Endothelial cell of umbilical vein (primary cell): ENCODE measurements at regions of chr6 and their contacts with region 1.

Region 1: GRCh38 chr6:136037876-136038460 is 186.5 kb downstream of the PDE7B start:
- DNase-seq: peak; percentile 70
- H3K4me3 ChIP-seq: peak overlapping the region; percentile 53 to 97 (median 56)
- H3K27ac ChIP-seq: peak overlapping the region; percentile 93
- H3K4me1 ChIP-seq: peaks cover 70% of the 10 kb centered on the region
- H3K27me3 ChIP-seq: no peaks in the 10 kb centered on the region
- CTCF ChIP-seq: peak; percentile 20 to 39
- POLR2A ChIP-seq: no peak

Region 2: GRCh38 chr6:135630789-135631376 is 407.1 kb before region 1 on chr6:
- CTCF ChIA-PET with region 1: no interaction called
- POLR2A ChIA-PET with region 1: no interaction called
- dilution Hi-C with region 1: no loop called
- intact Hi-C with region 1: loop called (anchors 2 kb)
- DNase-seq: peak; percentile 91
- H3K4me3 ChIP-seq: no peak overlapping the region
- H3K27ac ChIP-seq: peak overlapping the region; percentile 80
- H3K4me1 ChIP-seq: peaks cover 21% of the 10 kb centered on the region
- H3K27me3 ChIP-seq: no peaks in the 10 kb centered on the region
- CTCF ChIP-seq: no peak
- POLR2A ChIP-seq: no peak

Region 3: DNA sequence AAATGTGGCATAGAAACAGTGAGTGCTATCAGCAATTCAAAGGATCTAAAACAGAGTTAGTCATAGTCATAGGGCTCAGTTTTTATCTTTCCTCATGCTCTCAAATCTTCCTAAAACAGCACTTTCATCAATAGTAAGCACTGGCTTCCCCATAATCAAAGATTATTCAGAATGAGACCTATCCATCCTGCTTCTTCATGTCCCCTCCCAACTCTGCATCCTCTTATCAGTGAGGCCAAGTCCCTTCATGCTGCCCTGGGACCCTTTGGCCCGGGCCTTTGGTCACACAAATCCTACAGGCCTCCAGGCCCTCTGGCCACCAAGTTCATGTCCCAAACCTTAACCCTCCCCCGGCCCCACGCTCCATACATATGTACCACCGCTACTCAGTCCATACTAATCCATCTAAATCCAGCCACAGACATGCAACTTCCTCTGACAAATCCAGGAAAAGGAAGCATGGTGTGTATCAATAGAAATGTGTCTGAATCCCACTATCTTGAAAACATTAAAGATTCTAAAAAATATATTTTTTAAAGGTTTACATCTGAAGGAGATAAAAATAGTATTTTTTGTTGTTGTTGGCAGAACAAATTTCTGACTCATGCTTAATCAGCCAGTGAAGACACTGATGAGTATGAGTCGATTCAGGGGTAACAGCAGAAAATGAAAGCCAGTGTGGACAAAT is 43.0 kb before region 1 on chr6:
- CTCF ChIA-PET with region 1: no interaction called
- POLR2A ChIA-PET with region 1: no interaction called
- dilution Hi-C with region 1: no loop called
- intact Hi-C with region 1: loop called (anchors 1 kb)
- DNase-seq: peak; percentile 82
- H3K4me3 ChIP-seq: no peak overlapping the region
- H3K27ac ChIP-seq: peak overlapping the region; percentile 82
- H3K4me1 ChIP-seq: peaks cover 19% of the 10 kb centered on the region
- H3K27me3 ChIP-seq: no peaks in the 10 kb centered on the region
- CTCF ChIP-seq: no peak
- POLR2A ChIP-seq: no peak

Region 4: DNA sequence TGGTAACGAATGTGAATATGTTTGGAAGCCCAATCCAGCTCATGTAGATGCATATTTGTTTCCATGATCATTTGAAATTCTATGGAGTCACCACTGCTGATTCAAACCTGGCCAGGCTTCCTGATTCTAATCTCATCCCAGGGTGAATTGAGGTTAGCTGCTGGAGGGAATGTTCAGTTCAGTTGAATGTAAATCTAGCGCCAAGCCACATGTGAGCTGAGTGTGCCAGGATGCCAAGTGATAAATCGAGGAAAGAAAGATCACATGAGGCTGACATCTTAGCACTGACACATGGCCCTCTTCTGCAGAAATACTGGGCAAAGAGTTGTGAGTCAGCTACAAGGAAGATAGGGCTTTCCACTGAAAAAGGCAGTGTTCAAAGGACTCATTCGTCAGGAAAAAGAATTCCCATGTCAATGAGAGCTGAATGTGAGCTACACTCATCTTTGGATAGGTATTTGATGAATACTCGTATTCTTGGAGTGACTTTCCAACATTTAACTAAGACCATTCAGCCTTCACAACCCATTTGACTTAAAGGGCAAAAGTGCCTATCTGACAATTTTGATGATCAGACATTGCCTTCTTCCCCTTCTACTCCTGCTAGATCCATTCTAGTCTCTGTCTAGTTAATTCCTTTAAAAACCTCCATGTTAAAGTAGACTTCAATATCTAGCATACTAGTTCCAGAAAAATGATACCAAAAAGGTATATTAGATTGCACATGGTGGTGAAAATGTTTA is 40.0 kb after region 1 on chr6:
- CTCF ChIA-PET with region 1: interaction called, 15 read pairs
- POLR2A ChIA-PET with region 1: no interaction called
- dilution Hi-C with region 1: no loop called
- intact Hi-C with region 1: no loop called
- DNase-seq: peak; percentile 97
- H3K4me3 ChIP-seq: no peak overlapping the region
- H3K27ac ChIP-seq: peak overlapping the region; percentile 69
- H3K4me1 ChIP-seq: peaks cover 23% of the 10 kb centered on the region
- H3K27me3 ChIP-seq: no peaks in the 10 kb centered on the region
- CTCF ChIP-seq: no peak
- POLR2A ChIP-seq: no peak

Region 5: GRCh38 chr6:136173519-136174507 is 135.8 kb after region 1 on chr6:
- CTCF ChIA-PET with region 1: interaction called, 5 read pairs
- POLR2A ChIA-PET with region 1: no interaction called
- dilution Hi-C with region 1: no loop called
- intact Hi-C with region 1: loop called (anchors 1 kb)
- DNase-seq: peak; percentile 89
- H3K4me3 ChIP-seq: no peak overlapping the region
- H3K27ac ChIP-seq: peak overlapping the region; percentile 69
- H3K4me1 ChIP-seq: peaks cover 13% of the 10 kb centered on the region
- H3K27me3 ChIP-seq: no peaks in the 10 kb centered on the region
- CTCF ChIP-seq: no peak
- POLR2A ChIP-seq: no peak